ENCODE measurements at regions of chr17 and their contacts with region 1.

Region 1: DNA sequence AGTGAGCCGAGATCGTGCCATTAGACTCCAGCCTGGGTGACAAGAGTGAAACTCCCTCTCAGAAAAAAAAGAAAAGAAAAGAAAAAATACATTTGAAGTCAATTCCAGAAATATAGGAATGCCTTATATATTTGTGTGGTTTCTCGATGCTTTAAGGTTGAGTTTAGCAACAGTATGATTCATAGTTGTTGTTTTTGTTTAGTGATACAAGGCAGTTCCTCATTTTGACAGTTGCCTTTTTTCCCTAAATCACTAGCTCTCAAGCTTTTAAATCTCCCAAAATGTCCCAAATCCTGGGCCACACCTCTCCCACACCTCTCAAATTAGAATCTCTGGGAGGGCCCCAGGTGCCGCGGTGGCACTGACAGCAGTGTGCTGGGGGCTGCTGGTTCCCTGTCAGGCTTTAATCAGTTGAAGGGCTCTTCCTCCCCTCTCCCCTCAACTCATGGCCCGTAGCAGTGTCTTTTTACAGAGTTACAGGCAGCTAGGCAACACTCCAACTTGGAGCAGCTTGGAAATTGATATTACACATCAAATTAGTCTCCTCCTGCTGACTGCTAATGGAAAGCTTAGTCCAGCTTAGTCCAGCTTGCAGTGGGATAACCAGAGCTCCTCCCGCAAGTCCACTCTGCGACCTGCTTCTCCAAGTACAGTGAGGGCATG is 58.4 kb downstream of the EPN2 start:
- DNase-seq: no peak
- H3K4me3 ChIP-seq: no peak overlapping the region
- CTCF ChIP-seq: no peak
- POLR2A ChIP-seq: no peak

Region 2: GRCh38 chr17:17868641-17869522 is 1426.7 kb before region 1 on chr17:
- intact Hi-C with region 1: loop called (anchors 5 kb)
- DNase-seq: no peak
- H3K4me3 ChIP-seq: no peak overlapping the region
- CTCF ChIP-seq: no peak
- POLR2A ChIP-seq: no peak